Transverse colon (tissue), 4 donors: ENCODE measurements at regions of chr1 and their contacts with region 1.

Region 1: DNA sequence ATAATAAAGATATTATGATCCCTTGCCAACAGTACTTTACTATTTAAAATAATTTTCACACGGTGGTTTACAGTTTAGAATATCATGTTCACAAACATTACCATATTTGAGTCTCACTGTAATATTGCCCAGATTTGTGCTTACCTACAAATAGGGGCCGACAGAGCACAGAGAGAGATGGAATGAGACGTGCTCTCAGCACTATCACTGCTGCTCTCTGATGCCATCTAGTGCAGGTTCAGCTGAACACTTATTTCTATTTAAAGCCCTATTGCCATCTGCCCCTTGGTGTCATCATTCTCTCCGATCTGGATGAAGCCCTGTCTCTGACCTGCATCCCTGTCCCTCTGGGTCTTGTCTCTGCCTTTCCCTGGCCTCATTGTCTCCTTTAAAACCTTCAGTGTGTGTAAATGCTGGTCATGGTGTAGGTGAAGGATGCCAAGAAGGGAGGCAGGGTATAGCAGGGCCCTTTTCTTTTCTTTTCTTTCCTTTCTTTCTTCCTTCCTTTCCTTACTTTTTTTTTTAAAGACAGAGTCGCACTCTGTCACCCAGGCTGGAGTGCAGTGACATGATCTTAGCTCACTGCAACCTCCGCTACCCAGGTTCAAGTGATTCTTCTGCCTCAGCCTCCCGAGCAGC is 6.9 kb upstream of the GPATCH4 start:
- DNase-seq: peak; percentile 63
- H3K4me3 ChIP-seq: no peak overlapping the region
- H3K27ac ChIP-seq: no peak overlapping the region
- H3K4me1 ChIP-seq: peaks cover 0 to 3% (median 0%) of the 10 kb centered on the region in 4 donors
- H3K27me3 ChIP-seq: peaks cover 34% of the 10 kb centered on the region
- CTCF ChIP-seq: peak; percentile 70 to 86 (median 75)
- EP300 ChIP-seq: no peak
- POLR2A ChIP-seq: no peak

Region 2: DNA sequence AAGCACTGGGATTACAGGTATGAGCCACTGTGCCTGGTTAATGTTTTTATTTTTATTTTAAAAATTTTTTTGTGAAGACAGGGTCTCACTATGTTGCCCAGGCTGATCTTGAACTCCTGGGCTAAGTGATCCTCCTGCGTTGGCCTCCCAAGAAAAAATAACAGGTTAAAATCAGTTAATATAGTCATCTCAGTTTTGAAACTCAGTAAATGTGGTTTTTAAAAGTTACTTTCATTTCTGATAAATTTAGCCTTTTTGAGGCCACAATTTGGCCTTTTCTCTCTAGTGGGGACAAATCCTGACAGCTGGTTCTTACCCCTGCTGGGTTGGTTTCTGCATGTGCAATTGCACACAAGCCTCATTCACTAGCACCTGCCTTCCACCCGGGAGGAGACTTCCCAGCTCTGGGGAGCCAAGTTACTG is 382.0 kb before region 1 on chr1:
- in situ Hi-C with region 1: no loop called
- intact Hi-C with region 1: no loop called
- DNase-seq: no peak
- H3K4me3 ChIP-seq: no peak overlapping the region
- H3K27ac ChIP-seq: peak overlapping the region in 3 of 4 donors; percentile 15 to 47 (median 30)
- H3K4me1 ChIP-seq: peaks cover 0 to 10% (median 4%) of the 10 kb centered on the region in 4 donors
- H3K27me3 ChIP-seq: no peaks in the 10 kb centered on the region
- CTCF ChIP-seq: no peak
- EP300 ChIP-seq: no peak
- POLR2A ChIP-seq: no peak

Region 3: GRCh38 chr1:156451505-156452160 is 156.5 kb before region 1 on chr1:
- in situ Hi-C with region 1: loop called in 2 of 4 experiments (anchors 5 to 10 kb)
- intact Hi-C with region 1: no loop called
- DNase-seq: no peak
- H3K4me3 ChIP-seq: no peak overlapping the region
- H3K27ac ChIP-seq: no peak overlapping the region
- H3K4me1 ChIP-seq: peaks cover 0 to 9% (median 6%) of the 10 kb centered on the region in 4 donors
- H3K27me3 ChIP-seq: no peaks in the 10 kb centered on the region
- CTCF ChIP-seq: peak in 3 of 5 experiments; percentile 15 to 34 (median 26)
- EP300 ChIP-seq: no peak
- POLR2A ChIP-seq: no peak

Region 4: DNA sequence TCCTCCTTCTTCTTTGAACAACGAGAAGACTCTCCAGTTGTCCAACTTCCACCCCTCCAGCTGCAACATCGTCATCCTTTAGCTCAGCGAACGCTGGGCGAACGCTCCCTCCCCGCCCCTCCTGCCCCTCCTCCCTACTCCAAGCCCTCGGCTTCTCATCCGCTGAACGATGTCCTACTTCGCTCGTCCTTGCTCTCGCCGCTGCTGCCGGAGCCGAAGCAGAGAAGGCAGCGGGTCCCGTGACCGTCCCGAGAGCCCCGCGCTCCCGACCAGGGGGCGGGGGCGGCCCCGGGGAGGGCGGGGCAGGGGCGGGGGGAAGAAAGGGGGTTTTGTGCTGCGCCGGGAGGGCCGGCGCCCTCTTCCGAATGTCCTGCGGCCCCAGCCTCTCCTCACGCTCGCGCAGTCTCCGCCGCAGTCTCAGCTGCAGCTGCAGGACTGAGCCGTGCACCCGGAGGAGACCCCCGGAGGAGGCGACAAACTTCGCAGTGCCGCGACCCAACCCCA is 33.7 kb after region 1 on chr1 and contains the start of gene BCAN:
- in situ Hi-C with region 1: no loop called
- intact Hi-C with region 1: no loop called
- DNase-seq: no peak
- H3K4me3 ChIP-seq: peak within 1 kb of the TSS; percentile 1 to 40 (median 16)
- H3K27ac ChIP-seq: no peak within 1 kb of the TSS
- H3K4me1 ChIP-seq: peaks cover 5 to 12% (median 10%) of the 10 kb centered on the region in 4 donors
- H3K27me3 ChIP-seq: peaks cover 89% of the 10 kb centered on the region
- CTCF ChIP-seq: no peak
- EP300 ChIP-seq: no peak
- POLR2A ChIP-seq: no peak
- total RNA-seq, gene BCAN: 0.55 to 0.95 TPM in 2 of 4 donors, not detected in the others